ENCODE measurements at regions of chr10 and their contacts with region 1.

Region 1: DNA sequence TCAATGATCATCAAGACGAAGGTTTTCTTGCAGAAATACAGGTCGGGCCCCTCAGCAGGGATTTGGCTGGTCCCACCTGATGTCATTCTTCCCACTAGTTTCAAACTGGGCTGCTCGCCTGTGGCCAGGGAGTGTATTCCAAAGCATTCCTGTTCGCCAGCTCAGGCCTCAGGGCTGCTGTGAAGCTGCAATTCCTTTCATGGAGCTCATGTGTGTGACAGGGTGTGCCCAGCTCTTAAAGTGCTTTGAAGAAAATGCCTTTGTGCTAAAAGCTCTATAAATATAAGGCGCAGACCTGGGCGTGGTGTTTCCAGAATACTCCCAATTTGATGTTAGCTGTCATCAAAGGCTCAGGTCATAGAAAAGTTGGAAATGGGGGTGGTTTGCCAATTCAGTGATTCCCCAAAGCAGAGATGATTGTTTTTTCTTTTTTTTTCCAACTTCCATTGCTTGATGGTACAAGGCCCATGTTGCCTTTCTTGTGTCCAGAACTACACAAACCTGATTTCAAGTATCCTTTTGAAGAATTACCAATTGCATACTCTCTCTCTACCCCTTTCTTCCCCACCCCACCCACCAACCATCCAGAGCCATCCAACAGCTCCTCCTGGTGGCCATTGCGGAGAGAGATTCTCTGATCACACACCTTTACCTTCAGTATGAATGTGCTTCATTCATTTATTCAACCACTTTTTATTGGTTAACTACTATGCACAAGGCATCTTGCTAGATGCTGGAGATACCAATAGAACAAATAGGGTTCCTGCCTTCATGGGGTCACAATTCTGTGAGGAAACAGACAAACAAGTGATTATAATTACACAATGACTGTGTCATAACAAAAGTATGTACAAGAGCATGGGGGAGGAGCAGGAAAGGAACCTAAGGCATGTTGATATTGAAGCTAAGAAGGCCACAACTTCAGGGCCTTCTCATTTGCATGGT is 297.3 kb upstream of the LYZL1 start:
- DNase-seq: no peak
- ATAC-seq: no peak
- H3K4me3 Mint-ChIP-seq: no peak overlapping the region
- H3K27ac Mint-ChIP-seq: no peak overlapping the region
- H3K4me1 Mint-ChIP-seq: no peaks in the 10 kb centered on the region
- H3K27me3 Mint-ChIP-seq: no peaks in the 10 kb centered on the region
- CTCF ChIP-seq: no peak

Region 2: DNA sequence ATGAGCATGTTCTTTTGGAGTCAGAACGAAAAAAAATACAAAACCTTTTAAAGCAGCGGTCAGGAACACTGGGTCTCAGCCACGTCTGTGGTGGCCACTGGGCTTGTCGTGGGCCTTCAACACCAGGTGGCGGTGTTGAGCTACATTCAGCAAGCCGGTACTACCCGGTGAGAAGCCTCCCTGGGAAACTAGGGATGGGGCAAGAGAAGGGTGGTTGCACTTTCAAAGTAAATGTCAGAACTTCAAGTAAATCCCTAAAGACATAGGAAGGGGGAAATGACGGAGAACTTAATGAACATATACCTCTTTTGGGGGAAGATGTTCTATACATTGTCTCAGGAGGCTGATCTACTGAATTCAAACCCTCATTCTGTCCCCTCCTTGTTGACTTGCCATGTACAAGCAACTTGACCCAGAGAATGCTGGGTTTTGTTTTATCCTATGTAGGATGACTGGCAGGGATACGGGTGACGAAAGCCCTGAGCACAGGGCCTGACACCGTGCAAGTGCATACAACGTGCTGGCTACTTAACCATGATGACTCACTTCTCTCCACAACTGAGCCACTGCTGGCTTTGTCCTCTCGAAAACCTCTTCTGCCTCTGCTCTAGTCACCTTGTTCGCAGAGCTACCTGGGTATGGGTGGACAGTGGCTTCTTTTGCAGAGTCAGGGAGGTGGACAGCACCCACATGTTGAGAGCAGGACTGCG is 363.3 kb before region 1 on chr10:
- CTCF ChIA-PET with region 1: no interaction called
- POLR2A ChIA-PET with region 1: no interaction called
- intact Hi-C with region 1: loop called (anchors 1 kb)
- DNase-seq: peak; percentile 41
- ATAC-seq: peak; percentile 66
- H3K4me3 Mint-ChIP-seq: no peak overlapping the region
- H3K27ac Mint-ChIP-seq: no peak overlapping the region
- H3K4me1 Mint-ChIP-seq: peaks cover 6% of the 10 kb centered on the region
- H3K27me3 Mint-ChIP-seq: peaks cover 17% of the 10 kb centered on the region
- CTCF ChIP-seq: peak; percentile 90

Measured in activated B cell treated with CpG ODN at 0.5 μM for 24 hours (primary cell).